ENCODE measurements at regions of chr5 and their contacts with region 1.

Region 1: DNA sequence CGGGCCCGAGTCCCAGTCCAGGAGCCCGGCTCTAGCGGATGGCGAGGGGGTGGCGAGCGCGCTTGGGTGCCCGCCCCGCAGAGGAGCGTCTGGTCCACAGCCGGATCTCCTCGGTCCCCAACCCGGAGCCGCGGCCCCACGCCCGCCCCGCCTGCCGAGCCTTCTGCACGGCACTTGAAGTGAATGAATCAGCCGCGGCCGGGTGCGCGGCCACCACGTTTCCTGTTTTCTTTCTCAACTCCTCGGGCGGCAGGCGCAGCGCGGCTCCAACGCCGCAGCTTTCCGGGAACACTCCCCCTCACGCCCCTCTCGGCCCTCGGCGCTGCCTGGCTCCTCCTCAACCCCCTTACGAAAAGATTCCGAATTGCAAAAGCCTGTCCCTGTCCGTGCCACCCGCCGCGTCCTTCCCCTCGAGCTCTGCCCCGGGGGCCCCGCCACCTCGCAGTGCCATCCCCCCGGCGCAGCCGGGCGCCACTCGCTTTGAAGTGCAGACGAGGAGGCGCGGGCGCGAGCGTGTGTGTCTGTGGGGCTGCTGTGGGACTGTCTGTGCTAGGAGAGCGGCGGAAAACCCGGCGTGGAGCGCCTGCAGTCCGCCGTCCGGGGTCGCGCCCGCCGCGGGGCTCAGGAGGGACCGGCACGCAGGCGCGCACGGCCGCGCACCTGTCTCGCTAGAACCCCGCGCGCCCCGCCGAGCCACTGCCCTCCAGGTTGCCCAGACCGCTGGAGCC is 456.6 kb downstream of the RAB3C start:
- DNase-seq: peak; percentile 87
- H3K4me3 ChIP-seq: peak overlapping the region; percentile 76
- H3K27ac ChIP-seq: peak overlapping the region; percentile 89
- H3K4me1 ChIP-seq: peaks cover 85% of the 10 kb centered on the region
- H3K27me3 ChIP-seq: no peaks in the 10 kb centered on the region
- CTCF ChIP-seq: no peak

Region 2: GRCh38 chr5:59126708-59127573 is 87.5 kb after region 1 on chr5:
- intact Hi-C with region 1: loop called (anchors 5 kb)
- DNase-seq: peak; percentile 18
- H3K4me3 ChIP-seq: peak overlapping the region; percentile 57
- H3K27ac ChIP-seq: peak overlapping the region; percentile 87
- H3K4me1 ChIP-seq: peaks cover 57% of the 10 kb centered on the region
- H3K27me3 ChIP-seq: no peaks in the 10 kb centered on the region
- CTCF ChIP-seq: no peak

Region 3: DNA sequence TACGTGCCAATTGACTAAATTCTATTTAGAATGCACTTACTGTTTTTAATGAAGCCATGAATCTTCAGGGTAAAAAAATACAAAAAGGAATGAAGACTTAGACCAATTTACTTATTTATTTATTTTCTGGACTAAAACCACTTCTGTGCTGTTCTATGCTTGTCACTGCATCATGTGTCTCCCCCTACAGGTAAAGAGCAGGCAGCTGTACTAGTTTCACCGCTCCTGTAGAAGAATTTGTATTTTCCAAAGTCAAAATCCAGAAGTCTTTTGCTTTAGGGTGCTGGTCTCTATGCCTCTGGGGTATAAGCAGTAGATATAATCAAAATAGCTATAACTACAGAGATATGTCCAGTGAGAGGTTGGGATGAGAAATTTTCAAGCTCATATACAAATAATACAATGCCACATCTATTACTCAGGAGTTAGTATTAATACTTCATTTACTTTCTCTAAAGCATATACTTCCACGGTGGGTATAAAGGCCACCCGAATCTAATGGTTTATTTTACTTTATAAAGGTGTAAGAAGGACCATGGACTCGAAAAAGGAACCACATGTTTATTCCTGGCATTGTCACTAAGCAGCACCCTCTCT is 134.9 kb after region 1 on chr5:
- intact Hi-C with region 1: loop called (anchors 5 kb)
- DNase-seq: no peak
- H3K4me3 ChIP-seq: no peak overlapping the region
- H3K27ac ChIP-seq: no peak overlapping the region
- H3K4me1 ChIP-seq: peaks cover 17% of the 10 kb centered on the region
- H3K27me3 ChIP-seq: no peaks in the 10 kb centered on the region
- CTCF ChIP-seq: peak; percentile 87

Measured in left ventricle myocardium inferior (tissue), 1 donor.